HCT116 (cell line): ENCODE measurements at regions of chr11 and their contacts with region 1.

Region 1: GRCh38 chr11:125201525-125202141 is 37.1 kb downstream of the PKNOX2 start:
- DNase-seq: no peak
- ATAC-seq: no peak
- H3K4me3 ChIP-seq: no peak overlapping the region
- H3K27ac ChIP-seq: no peak overlapping the region
- H3K4me1 ChIP-seq: no peaks in the 10 kb centered on the region
- H3K27me3 ChIP-seq: peaks cover 3% of the 10 kb centered on the region; the same call in 1 of the 2 replicates
- CTCF ChIP-seq: no peak
- POLR2A ChIP-seq: no peak
- RAD21 ChIP-seq: no peak

Region 2: GRCh38 chr11:125102510-125102909 is 99.1 kb before region 1 on chr11:
- CTCF ChIA-PET with region 1: no interaction called
- POLR2A ChIA-PET with region 1: no interaction called
- RAD21 ChIA-PET with region 1: no interaction called
- intact Hi-C with region 1: no loop called
- DNase-seq: no peak
- ATAC-seq: no peak
- H3K4me3 ChIP-seq: no peak overlapping the region
- H3K27ac ChIP-seq: no peak overlapping the region
- H3K4me1 ChIP-seq: no peaks in the 10 kb centered on the region
- H3K27me3 ChIP-seq: no peaks in the 10 kb centered on the region
- CTCF ChIP-seq: no peak
- POLR2A ChIP-seq: no peak
- RAD21 ChIP-seq: no peak

Region 3: DNA sequence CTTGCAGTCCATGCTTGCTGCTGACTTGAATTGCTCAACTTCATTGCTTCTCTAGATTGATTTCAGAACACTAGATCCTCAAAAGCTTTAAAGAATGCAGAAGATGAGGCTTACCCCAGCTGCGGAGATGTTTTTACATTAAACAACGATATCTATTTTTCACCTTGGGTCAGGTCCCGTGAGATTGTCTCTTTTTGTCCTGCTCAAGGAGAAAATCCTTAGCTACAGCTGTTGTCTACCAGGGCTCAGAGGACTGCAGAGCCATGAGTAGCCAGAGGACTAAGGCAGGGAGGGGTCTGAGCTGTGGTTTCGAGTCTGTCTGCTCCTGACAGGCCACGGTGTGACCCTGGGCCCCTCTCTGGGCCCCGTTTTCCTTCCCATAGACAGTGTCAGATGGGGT is 14.3 kb after region 1 on chr11:
- CTCF ChIA-PET with region 1: interaction called, 3 read pairs
- POLR2A ChIA-PET with region 1: no interaction called
- RAD21 ChIA-PET with region 1: no interaction called
- intact Hi-C with region 1: loop called (anchors 1 kb)
- DNase-seq: no peak
- ATAC-seq: no peak
- H3K4me3 ChIP-seq: no peak overlapping the region
- H3K27ac ChIP-seq: no peak overlapping the region
- H3K4me1 ChIP-seq: no peaks in the 10 kb centered on the region
- H3K27me3 ChIP-seq: 0 out of 2 replicates have a peak, but pooled peaks cover 3% of the 10 kb centered on the region
- CTCF ChIP-seq: no peak
- POLR2A ChIP-seq: no peak
- RAD21 ChIP-seq: no peak